Activated T-helper 1 cell treated with anti-CD3 and anti-CD28 coated beads, Interleukin-12 subunit alpha, Interleukin-12 subunit beta, Interleukin-2, Interleukin-4 antibody, amounts not matched to agents 30 ng/mL and 10 ng/mL and 1 ng/mL, durations not matched to agents 14 hours and 24 hours and 36 hours (primary cell): ENCODE measurements at regions of chr7 and their contacts with region 1.

Region 1: GRCh38 chr7:93231799-93232672 is at the start of gene VPS50:
- DNase-seq: peak; percentile 91
- H3K4me3 Mint-ChIP-seq: peak within 1 kb of the TSS; percentile 98
- H3K27ac Mint-ChIP-seq: peak within 1 kb of the TSS; percentile 93
- H3K4me1 Mint-ChIP-seq: peaks cover 18% of the 10 kb centered on the region
- H3K27me3 Mint-ChIP-seq: peaks cover 7% of the 10 kb centered on the region
- total RNA-seq, gene VPS50: 16.7 and 17.0 TPM in 2 replicates

Region 2: DNA sequence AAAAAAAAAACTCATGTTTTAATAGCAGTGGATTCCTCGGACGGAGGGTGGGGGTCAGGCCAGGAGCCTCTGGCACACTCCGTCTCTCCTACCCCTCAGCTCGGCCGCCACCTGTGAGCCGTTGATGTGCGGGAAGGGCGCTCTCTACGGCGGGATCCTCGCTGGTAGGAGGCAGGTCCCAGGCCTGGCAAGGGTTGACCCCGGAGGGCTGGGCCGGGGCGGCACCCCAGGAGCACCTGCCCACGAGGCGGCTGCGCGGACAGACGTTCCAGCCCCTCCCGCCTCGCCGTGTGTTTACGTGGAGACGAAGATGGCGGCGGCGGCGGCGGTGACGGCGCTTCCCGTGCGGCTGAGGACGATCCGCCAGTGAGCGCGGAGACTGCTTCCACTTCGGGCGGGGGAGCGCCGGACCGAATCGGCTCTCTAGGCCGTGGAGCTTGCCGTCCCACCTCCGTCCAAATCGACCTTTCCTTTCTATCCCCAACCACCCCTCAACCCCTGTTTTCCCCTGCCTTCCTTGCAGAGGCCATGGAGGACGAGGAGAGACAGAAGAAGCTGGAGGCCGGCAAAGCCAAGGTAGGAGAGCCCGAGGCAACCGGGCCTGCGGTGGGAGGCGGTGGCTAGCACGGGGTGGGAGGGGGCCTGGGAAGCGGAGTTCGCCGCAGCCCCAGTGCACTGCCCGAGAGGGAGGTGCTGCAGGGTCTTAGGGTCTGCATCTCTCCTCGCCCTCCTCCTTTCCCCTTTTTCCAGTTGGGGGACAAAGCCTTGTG is 1291.3 kb before region 1 on chr7 and contains the start of gene AKAP9:
- intact Hi-C with region 1: loop called (anchors 2 kb)
- DNase-seq: peak; percentile 87
- H3K4me3 Mint-ChIP-seq: peak within 1 kb of the TSS; percentile 88
- H3K27ac Mint-ChIP-seq: peak within 1 kb of the TSS; percentile 97
- H3K4me1 Mint-ChIP-seq: peaks cover 30% of the 10 kb centered on the region
- H3K27me3 Mint-ChIP-seq: peaks cover 11% of the 10 kb centered on the region
- total RNA-seq, gene AKAP9: 34.1 and 36.1 TPM in 2 replicates

Region 3: DNA sequence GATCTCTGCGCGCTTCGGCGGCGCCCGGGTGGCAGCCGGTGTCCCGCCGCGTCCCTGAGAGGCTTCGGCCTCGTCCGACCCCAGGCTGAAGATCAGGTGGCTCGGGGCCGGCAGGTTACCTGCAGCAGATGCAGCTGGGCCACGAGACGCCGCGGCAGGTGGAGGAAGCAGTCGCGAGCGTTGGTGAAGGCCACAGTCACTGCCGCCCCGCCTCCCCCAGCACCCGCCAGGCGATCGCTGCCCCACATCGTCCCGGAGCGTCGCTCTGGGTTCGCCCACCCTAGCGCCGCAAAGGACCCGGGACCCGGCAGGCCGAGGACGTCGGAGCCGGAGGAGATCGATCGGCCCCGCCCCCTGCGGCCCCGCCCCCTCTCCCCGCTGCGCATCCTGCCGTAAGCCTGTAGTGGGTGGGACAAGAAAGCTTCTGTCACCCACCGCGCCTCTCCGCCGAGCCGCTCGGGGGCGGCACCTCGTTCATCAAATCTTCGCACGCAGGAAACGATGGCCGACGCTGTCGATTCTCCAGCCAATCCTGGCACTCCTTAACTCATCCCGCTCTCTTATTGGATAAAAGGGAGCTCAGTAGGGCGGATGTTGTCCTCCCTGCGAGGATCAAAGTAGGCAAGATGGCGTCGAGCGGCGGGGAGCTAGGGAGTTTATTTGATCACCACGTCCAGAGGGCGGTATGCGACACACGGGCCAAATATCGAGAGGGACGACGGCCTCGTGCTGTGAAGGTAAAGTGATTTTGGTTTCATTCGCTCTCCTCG is 703.7 kb before region 1 on chr7 and contains the starts of genes PEX1 and RBM48:
- intact Hi-C with region 1: loop called (anchors 1 kb)
- DNase-seq: peak; percentile 94
- H3K4me3 Mint-ChIP-seq: peak within 1 kb of the TSS; percentile 91
- H3K27ac Mint-ChIP-seq: peak within 1 kb of the TSS; percentile 94
- H3K4me1 Mint-ChIP-seq: peaks cover 24% of the 10 kb centered on the region
- H3K27me3 Mint-ChIP-seq: no peaks in the 10 kb centered on the region
- total RNA-seq, gene PEX1: 14.7 and 17.0 TPM in 2 replicates
- total RNA-seq, gene RBM48: 17.2 and 17.6 TPM in 2 replicates

Region 4: DNA sequence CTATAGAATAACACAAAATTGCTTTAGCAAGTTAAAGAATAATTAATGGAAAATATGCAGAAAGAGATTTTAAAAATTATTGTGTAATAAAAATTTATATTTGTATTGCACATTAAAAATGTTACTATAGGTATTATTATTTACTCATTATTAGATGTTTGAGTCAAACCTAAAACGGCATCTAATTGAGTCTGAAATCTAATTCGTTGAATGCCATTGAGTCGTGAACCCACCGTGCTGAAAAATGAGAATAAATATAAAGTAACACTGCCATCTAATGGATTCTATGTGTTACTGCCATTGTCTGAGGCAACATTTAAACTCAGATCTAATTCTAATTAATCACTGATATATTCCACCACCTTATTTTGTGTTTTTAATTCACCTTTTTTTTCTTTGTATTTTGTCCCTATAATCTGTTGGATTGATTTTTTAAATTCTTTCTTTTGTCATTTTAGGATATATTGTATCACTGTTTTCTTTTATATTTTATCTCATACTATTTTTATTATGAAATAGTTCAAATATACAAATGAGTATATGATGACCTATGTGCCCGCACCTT is 176.4 kb before region 1 on chr7:
- intact Hi-C with region 1: loop called (anchors 1 kb)
- DNase-seq: no peak
- H3K4me3 Mint-ChIP-seq: no peak overlapping the region
- H3K27ac Mint-ChIP-seq: no peak overlapping the region
- H3K4me1 Mint-ChIP-seq: peaks cover 19% of the 10 kb centered on the region
- H3K27me3 Mint-ChIP-seq: peaks cover 6% of the 10 kb centered on the region

Region 5: DNA sequence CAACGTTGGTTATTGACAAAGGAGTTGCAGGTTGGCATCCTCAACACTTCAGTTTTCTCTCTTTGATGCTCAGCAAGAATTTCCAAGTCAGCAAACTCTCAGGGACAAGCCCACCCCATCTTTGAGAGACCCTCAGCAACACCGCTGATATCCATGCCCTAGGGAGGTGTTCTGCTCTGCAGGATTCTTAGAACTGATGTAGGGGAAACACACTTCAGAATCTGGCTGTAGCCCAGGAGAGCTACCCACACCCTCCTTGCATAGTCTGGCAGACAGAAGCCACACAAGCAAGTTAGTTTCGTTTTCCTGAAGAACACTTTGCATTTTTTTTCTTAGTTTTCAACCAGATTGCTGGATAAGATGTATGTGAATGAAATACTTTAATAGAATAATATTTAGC is 84.7 kb before region 1 on chr7:
- intact Hi-C with region 1: loop called (anchors 1 kb)
- DNase-seq: peak; percentile 22
- H3K4me3 Mint-ChIP-seq: peak overlapping the region; percentile 93
- H3K27ac Mint-ChIP-seq: peak overlapping the region; percentile 87
- H3K4me1 Mint-ChIP-seq: peaks cover 68% of the 10 kb centered on the region
- H3K27me3 Mint-ChIP-seq: no peaks in the 10 kb centered on the region

Region 6: GRCh38 chr7:94509879-94510581 is 1278.0 kb after region 1 on chr7:
- intact Hi-C with region 1: loop called (anchors 5 kb)
- DNase-seq: peak; percentile 60
- H3K4me3 Mint-ChIP-seq: peak overlapping the region; percentile 86
- H3K27ac Mint-ChIP-seq: peak overlapping the region; percentile 88
- H3K4me1 Mint-ChIP-seq: peaks cover 30% of the 10 kb centered on the region
- H3K27me3 Mint-ChIP-seq: no peaks in the 10 kb centered on the region